Activated CD8-positive, alpha-beta memory T cell treated with anti-CD3 and anti-CD28 coated beads, Interleukin-2, amount 10 ng/mL, durations not matched to agents 7 days and 5 days (primary cell): ENCODE measurements at regions of chr9 and their contacts with region 1.

Region 1: DNA sequence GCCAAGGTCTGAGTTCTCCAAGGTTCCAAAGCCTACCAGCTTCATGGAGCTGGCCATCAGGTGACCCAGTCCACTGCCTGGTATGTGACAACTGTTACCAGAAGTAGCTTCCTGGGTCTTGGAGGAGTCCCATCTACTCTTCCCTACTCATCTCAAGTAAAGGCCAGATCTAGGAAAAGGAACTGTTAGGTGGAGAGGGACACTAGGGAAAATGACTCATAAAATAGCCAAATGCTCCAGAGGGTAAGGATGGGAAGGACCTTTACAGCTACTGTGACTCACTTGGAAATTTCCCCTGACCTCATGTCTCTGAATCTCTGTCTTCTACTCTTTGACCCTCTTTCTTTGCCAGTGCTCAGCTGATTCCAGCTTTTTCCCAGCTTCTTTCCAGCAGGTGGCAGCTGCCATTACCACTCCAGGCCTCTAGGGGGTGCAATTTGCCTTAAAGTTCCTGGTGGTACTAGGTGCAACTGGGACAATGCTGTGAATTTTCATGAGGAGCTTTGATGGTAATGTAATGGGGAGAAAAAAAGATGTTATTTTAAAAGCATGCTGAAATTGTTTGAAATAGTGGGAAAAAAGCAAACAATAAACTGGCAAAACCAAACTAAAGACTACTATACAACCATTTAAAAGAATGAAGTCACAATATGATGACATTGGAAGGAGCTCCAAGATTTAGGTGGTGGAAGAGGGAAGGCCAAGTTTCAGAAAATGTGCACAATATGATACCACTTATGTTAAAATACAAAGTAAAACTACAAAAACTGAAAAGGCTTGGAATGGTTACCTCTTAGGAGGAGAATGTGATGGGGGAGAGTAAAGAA is 27.1 kb upstream of the MYORG start:
- DNase-seq: peak; percentile 67
- ATAC-seq: no peak
- H3K4me3 Mint-ChIP-seq: no peak overlapping the region
- H3K27ac Mint-ChIP-seq: no peak overlapping the region
- H3K4me1 Mint-ChIP-seq: no peaks in the 10 kb centered on the region
- H3K27me3 Mint-ChIP-seq: no peaks in the 10 kb centered on the region

Region 2: DNA sequence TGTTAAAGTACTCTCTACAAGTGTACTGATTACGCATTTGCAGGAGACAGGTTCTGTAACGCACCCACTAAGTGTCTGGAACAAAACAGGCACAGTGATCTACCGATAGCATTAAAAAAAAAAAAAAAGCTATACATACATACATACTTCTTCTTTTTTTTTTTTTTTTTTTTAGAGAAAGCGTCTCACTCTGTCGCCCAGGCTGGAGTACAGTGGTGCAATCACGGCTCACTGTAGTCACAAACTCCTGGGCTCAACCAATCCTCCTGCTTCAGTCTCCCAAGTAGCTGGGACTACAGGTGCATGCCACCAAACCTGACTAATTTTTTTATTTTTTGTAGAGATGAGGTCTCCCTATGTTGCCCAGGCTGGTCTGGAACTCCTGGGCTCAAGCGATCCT is 82.3 kb before region 1 on chr9:
- CTCF ChIA-PET with region 1: no interaction called
- DNase-seq: no peak
- ATAC-seq: no peak
- H3K4me3 Mint-ChIP-seq: no peak overlapping the region
- H3K27ac Mint-ChIP-seq: no peak overlapping the region
- H3K4me1 Mint-ChIP-seq: peaks cover 2% of the 10 kb centered on the region
- H3K27me3 Mint-ChIP-seq: no peaks in the 10 kb centered on the region

Region 3: DNA sequence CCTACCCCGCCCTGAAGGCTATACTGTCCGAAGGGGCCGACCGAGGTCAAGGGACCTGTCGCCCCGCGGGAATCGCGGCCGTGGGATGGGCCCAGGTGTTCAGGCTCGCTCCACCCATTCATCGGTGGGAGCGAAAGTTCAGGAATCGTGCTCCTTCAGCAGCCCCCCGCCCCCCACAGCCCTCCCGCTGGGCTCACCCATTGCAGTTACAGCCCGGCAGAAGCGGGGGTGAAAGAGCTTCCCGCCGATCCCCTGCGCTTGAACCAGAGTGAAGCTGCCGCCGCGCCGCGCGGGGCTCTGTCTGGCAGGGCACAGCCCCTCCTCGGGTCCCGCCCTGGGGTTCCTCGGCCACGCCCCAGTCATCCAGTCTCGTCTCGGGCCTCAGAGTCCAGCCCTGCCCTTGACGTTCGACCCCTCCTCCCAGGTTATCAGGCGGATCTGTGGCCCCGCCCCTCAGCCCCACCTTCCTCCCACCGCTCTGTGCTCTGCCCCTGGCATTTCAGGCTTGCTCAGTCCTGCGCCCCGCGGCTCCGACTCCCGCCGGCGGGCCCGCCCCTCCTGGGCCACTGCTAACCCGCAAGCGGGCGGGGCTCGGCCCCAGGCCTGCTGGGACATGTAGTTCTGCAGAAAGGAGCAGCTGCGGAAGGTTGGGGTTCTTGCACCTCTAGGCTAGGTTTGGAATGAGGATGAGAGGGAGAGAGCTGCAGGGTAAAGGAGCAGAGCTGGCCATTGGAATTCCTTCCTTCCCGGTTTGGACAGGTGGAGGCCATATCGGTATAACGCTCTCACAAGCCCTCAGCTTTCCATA is 27.0 kb before region 1 on chr9 and contains the start of gene MYORG:
- CTCF ChIA-PET with region 1: interaction called, 17 read pairs
- DNase-seq: peak; percentile 99
- ATAC-seq: peak; percentile 82
- H3K4me3 Mint-ChIP-seq: peak within 1 kb of the TSS; percentile 83
- H3K27ac Mint-ChIP-seq: peak within 1 kb of the TSS; percentile 82
- H3K4me1 Mint-ChIP-seq: peaks cover 40% of the 10 kb centered on the region
- H3K27me3 Mint-ChIP-seq: peaks cover 4% of the 10 kb centered on the region
- total RNA-seq, gene MYORG: 3.7 to 4.2 TPM

Region 4: GRCh38 chr9:34392511-34392910 is 11.3 kb before region 1 on chr9:
- CTCF ChIA-PET with region 1: interaction called, 15 read pairs
- DNase-seq: peak; percentile 34
- ATAC-seq: no peak
- H3K4me3 Mint-ChIP-seq: no peak overlapping the region
- H3K27ac Mint-ChIP-seq: no peak overlapping the region
- H3K4me1 Mint-ChIP-seq: no peaks in the 10 kb centered on the region
- H3K27me3 Mint-ChIP-seq: peaks cover 25% of the 10 kb centered on the region

Region 5: GRCh38 chr9:34500623-34501267 is 97.0 kb after region 1 on chr9:
- CTCF ChIA-PET with region 1: interaction called, 15 read pairs
- DNase-seq: peak; percentile 83
- ATAC-seq: peak; percentile 89
- H3K4me3 Mint-ChIP-seq: no peak overlapping the region
- H3K27ac Mint-ChIP-seq: no peak overlapping the region
- H3K4me1 Mint-ChIP-seq: peaks cover 16% of the 10 kb centered on the region
- H3K27me3 Mint-ChIP-seq: peaks cover 23% of the 10 kb centered on the region

Region 6: GRCh38 chr9:34603610-34604231 is 200.0 kb after region 1 on chr9:
- CTCF ChIA-PET with region 1: interaction called, 19 read pairs
- DNase-seq: peak; percentile 86
- ATAC-seq: peak; percentile 92
- H3K4me3 Mint-ChIP-seq: no peak overlapping the region
- H3K27ac Mint-ChIP-seq: no peak overlapping the region
- H3K4me1 Mint-ChIP-seq: no peaks in the 10 kb centered on the region
- H3K27me3 Mint-ChIP-seq: peaks cover 12% of the 10 kb centered on the region